MCF 10A (cell line): ENCODE measurements at regions of chr18 and their contacts with region 1.

Region 1: GRCh38 chr18:74116633-74117554 is 30.7 kb downstream of the FBXO15 start:
- DNase-seq: peak; percentile 57
- H3K4me3 Mint-ChIP-seq: no peak overlapping the region
- H3K27ac Mint-ChIP-seq: peak overlapping the region; percentile 20
- H3K4me1 Mint-ChIP-seq: no peaks in the 10 kb centered on the region
- H3K27me3 Mint-ChIP-seq: peaks cover 15% of the 10 kb centered on the region
- CTCF ChIP-seq: peak; percentile 58

Region 2: GRCh38 chr18:72700961-72701718 is 1415.8 kb before region 1 on chr18:
- CTCF ChIA-PET with region 1: interaction called, 6 read pairs
- POLR2A ChIA-PET with region 1: no interaction called
- intact Hi-C with region 1: loop called (anchors 1 kb)
- DNase-seq: peak; percentile 40
- H3K4me3 Mint-ChIP-seq: no peak overlapping the region
- H3K27ac Mint-ChIP-seq: no peak overlapping the region
- H3K4me1 Mint-ChIP-seq: no peaks in the 10 kb centered on the region
- H3K27me3 Mint-ChIP-seq: no peaks in the 10 kb centered on the region
- CTCF ChIP-seq: peak; percentile 61

Region 3: GRCh38 chr18:73842795-73843394 is 274.0 kb before region 1 on chr18:
- CTCF ChIA-PET with region 1: interaction called, 10 read pairs
- POLR2A ChIA-PET with region 1: no interaction called
- intact Hi-C with region 1: loop called (anchors 10 kb)
- DNase-seq: peak; percentile 55
- H3K4me3 Mint-ChIP-seq: no peak overlapping the region
- H3K27ac Mint-ChIP-seq: peak overlapping the region; percentile 8
- H3K4me1 Mint-ChIP-seq: peaks cover 5% of the 10 kb centered on the region
- H3K27me3 Mint-ChIP-seq: no peaks in the 10 kb centered on the region
- CTCF ChIP-seq: peak; percentile 89

Region 4: GRCh38 chr18:73848656-73849055 is 268.2 kb before region 1 on chr18:
- CTCF ChIA-PET with region 1: interaction called, 10 read pairs
- POLR2A ChIA-PET with region 1: no interaction called
- intact Hi-C with region 1: loop called (anchors 10 kb)
- DNase-seq: peak; percentile 48
- H3K4me3 Mint-ChIP-seq: peak overlapping the region; percentile 0
- H3K27ac Mint-ChIP-seq: peak overlapping the region; percentile 68
- H3K4me1 Mint-ChIP-seq: peaks cover 17% of the 10 kb centered on the region
- H3K27me3 Mint-ChIP-seq: no peaks in the 10 kb centered on the region
- CTCF ChIP-seq: no peak

Region 5: DNA sequence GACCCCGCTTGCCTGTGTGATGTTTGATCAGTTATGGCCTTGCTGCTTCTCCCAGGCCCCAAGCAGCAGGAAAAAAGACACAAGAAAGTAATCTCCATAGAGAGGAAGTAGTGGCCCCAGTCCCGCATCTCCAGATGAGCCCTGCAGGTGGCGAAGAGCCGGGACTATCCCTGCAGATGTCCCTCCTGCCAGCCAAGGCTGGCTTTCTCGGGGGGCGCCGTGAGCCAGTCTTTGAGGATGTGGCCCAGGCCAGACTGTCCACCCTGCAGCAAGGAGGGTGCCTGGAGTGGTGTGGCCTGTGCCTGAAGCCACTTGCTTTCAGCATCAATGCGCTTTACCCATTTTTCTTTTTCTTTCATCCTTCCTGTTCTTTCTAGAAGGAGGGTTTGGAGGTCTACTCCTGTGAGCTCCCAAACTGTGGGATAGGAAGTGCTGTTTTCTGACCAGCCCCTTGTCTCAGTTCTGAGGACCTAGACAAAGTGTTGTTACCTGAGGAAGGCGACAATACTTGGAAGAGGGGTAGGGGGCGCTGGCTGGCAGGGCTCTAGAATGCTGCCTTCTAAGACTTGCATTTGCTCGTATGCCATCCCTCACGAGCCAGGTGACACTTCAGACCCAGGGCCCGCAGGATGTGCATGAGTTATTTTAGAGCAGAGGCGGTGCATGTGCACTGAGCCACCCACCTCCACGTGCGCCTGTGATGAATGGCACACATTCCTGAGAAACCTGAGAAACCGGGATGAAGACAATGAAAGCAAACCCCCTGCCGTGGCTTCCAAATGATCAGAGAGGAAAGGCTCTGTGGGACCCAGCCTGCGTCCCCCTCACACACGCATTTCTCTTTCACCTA is 225.1 kb before region 1 on chr18:
- CTCF ChIA-PET with region 1: no interaction called
- POLR2A ChIA-PET with region 1: no interaction called
- intact Hi-C with region 1: no loop called
- DNase-seq: peak; percentile 6
- H3K4me3 Mint-ChIP-seq: no peak overlapping the region
- H3K27ac Mint-ChIP-seq: no peak overlapping the region
- H3K4me1 Mint-ChIP-seq: no peaks in the 10 kb centered on the region
- H3K27me3 Mint-ChIP-seq: no peaks in the 10 kb centered on the region
- CTCF ChIP-seq: no peak

Region 6: GRCh38 chr18:73980289-73980979 is 136.5 kb before region 1 on chr18:
- CTCF ChIA-PET with region 1: interaction called, 3 read pairs
- POLR2A ChIA-PET with region 1: no interaction called
- intact Hi-C with region 1: loop called (anchors 10 kb)
- DNase-seq: peak; percentile 72
- H3K4me3 Mint-ChIP-seq: no peak overlapping the region
- H3K27ac Mint-ChIP-seq: peak overlapping the region; percentile 24
- H3K4me1 Mint-ChIP-seq: peaks cover 22% of the 10 kb centered on the region
- H3K27me3 Mint-ChIP-seq: no peaks in the 10 kb centered on the region
- CTCF ChIP-seq: peak; percentile 62

Region 7: GRCh38 chr18:74040459-74041332 is 76.2 kb before region 1 on chr18:
- CTCF ChIA-PET with region 1: interaction called, 4 read pairs
- POLR2A ChIA-PET with region 1: no interaction called
- intact Hi-C with region 1: loop called (anchors 5 kb)
- DNase-seq: peak; percentile 54
- H3K4me3 Mint-ChIP-seq: no peak overlapping the region
- H3K27ac Mint-ChIP-seq: no peak overlapping the region
- H3K4me1 Mint-ChIP-seq: no peaks in the 10 kb centered on the region
- H3K27me3 Mint-ChIP-seq: no peaks in the 10 kb centered on the region
- CTCF ChIP-seq: peak; percentile 41

Region 8: GRCh38 chr18:74050807-74051206 is 66.1 kb before region 1 on chr18:
- CTCF ChIA-PET with region 1: no interaction called
- POLR2A ChIA-PET with region 1: no interaction called
- intact Hi-C with region 1: no loop called
- DNase-seq: no peak
- H3K4me3 Mint-ChIP-seq: no peak overlapping the region
- H3K27ac Mint-ChIP-seq: no peak overlapping the region
- H3K4me1 Mint-ChIP-seq: no peaks in the 10 kb centered on the region
- H3K27me3 Mint-ChIP-seq: no peaks in the 10 kb centered on the region
- CTCF ChIP-seq: no peak